ENCODE measurements at regions of chr16 and their contacts with region 1.

Region 1: GRCh38 chr16:49827805-49828438 is 28.0 kb downstream of the ZNF423 start:
- DNase-seq: no peak
- ATAC-seq: no peak

Region 2: GRCh38 chr16:49766225-49766624 is 61.7 kb before region 1 on chr16:
- intact Hi-C with region 1: loop called in 1 of 2 experiments (anchors 10 kb)
- DNase-seq: no peak
- ATAC-seq: no peak

Region 3: GRCh38 chr16:49932946-49933345 is 105.0 kb after region 1 on chr16:
- intact Hi-C with region 1: no loop called
- DNase-seq: no peak
- ATAC-seq: no peak

Measured in left colon (tissue), 2 donors.